ENCODE measurements at regions of chr17 and their contacts with region 1.

Region 1: GRCh38 chr17:17919169-17920107 is 52.8 kb downstream of the TOM1L2 start:
- DNase-seq: peak; percentile 72
- ATAC-seq: peak; percentile 69

Region 2: GRCh38 chr17:17812211-17813057 is 107.0 kb before region 1 on chr17:
- intact Hi-C with region 1: loop called (anchors 5 kb)
- DNase-seq: peak; percentile 87
- ATAC-seq: peak; percentile 55

Region 3: GRCh38 chr17:17972126-17972951 is 52.9 kb after region 1 on chr17 and contains the starts of genes DRC3 and TOM1L2:
- intact Hi-C with region 1: loop called (anchors 5 kb)
- DNase-seq: peak; percentile 100
- ATAC-seq: peak; percentile 96
- total RNA-seq, gene DRC3: 1.4 TPM
- total RNA-seq, gene TOM1L2: 253 TPM

Region 4: GRCh38 chr17:18025945-18026776 is 106.7 kb after region 1 on chr17:
- intact Hi-C with region 1: loop called (anchors 10 kb)
- DNase-seq: peak; percentile 67
- ATAC-seq: peak; percentile 62

Measured in Right ventricle myocardium superior (tissue), 1 donor.